ENCODE measurements at regions of chr22 and their contacts with region 1.

Region 1: DNA sequence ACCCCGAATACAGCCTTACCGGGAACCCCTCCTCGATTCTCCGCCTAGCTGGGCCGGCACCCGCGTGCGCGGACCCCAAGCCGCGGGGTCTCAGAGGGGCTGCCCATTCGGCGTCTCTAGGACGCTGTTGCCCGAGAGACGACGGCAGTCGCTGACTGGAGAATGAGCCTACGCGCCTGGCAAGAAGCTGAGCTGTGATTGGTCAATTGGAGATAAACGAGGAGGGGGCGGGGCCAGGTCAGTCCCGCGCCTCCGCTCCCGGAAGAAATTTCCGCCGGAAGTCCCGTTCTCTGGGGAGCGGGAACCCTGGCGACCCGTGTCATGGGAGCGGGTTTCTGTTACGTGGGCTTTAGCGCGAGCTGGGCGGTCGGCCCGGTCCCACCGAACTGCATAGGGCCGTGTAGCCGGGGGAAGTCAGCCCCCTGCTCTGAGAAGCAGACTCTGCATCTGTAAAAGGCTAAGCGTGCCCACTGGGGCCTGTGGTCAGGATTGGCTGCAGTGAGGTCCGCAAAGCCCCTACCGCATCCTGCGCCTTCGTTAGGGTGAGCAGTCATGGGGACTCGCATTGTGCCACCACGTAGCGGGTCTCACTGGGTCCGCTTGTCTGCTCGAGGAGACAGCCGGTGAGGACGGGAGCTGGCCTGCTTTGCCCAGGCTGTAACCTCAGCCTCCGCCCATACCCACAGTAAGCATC is at the start of gene EFCAB6:
- DNase-seq: no peak
- H3K4me3 ChIP-seq: peak within 1 kb of the TSS; percentile 98
- CTCF ChIP-seq: no peak

Region 2: GRCh38 chr22:43796567-43796966 is 15.7 kb before region 1 on chr22:
- CTCF ChIA-PET with region 1: interaction called, 12 read pairs
- POLR2A ChIA-PET with region 1: interaction called, 3 read pairs
- DNase-seq: peak; percentile 34
- H3K4me3 ChIP-seq: no peak overlapping the region
- CTCF ChIP-seq: peak; percentile 58

Region 3: DNA sequence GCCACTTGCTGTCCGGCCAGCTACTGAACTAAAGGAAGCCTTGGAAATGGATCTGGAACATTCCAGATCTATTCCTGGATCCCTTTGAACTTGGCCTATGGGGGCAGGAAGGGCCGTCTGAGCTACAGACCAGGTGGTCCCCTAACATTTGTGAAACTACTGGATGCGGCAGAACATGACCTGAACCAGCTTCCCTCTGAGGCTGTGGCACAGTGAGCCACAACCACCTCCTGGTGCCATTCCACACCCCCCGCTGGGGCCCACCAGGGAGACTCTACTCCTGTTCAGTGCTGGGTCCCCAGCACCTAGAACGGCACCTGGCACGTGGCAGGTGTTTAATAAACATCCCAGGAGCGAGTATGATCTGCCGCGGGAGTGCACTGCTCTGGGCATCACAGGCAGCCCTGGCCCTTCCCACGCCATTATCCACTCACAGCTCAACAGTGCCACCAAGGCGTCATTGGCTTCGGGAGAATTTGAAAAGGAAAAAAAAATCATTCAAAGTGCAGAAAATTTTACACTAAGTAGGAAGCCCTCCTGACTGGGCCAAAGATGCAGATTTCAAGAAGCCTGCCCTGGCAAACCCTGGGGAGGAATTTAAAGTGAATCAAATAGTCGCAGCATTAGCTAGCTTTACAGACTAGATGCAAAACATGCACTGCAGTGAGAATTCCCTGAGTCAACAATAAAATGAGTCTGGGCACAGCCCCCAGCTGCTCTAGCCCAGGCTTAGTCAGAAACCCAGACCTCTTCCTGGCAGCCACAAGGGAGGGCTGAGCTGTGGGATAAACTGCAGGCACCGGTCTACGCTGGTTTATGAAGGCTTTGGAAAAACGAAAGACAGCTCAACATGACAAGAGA is 14.1 kb after region 1 on chr22:
- CTCF ChIA-PET with region 1: interaction called, 3 read pairs
- POLR2A ChIA-PET with region 1: interaction called, 12 read pairs
- DNase-seq: peak; percentile 33
- H3K4me3 ChIP-seq: peak overlapping the region; percentile 35
- CTCF ChIP-seq: peak; percentile 26

Region 4: DNA sequence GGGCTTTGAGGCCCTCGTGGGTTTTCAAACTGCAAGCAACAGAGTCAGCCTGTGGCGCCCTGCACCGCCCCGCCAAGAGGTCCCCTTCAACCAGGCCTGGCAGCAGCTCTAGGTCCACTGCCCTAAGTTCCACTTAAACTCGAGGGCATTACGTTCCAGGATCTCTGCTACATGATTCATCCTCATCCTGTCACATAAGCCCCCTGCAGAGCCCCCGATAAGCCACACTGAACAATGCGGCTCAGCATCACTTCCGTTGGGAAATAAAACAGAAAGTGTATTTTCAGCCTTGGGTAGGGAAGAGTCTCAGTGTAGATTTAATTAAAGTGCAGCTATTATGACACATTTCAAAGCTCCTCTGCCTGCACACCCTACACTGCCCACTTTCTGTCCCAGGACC is 25.4 kb after region 1 on chr22:
- CTCF ChIA-PET with region 1: no interaction called
- POLR2A ChIA-PET with region 1: no interaction called
- DNase-seq: no peak
- H3K4me3 ChIP-seq: no peak overlapping the region
- CTCF ChIP-seq: no peak

Region 5: GRCh38 chr22:43923631-43924464 is 111.6 kb after region 1 on chr22 and contains the start of gene PNPLA3:
- CTCF ChIA-PET with region 1: no interaction called
- POLR2A ChIA-PET with region 1: no interaction called
- DNase-seq: peak; percentile 17
- H3K4me3 ChIP-seq: peak within 1 kb of the TSS; percentile 64
- CTCF ChIP-seq: peak; percentile 35

Measured in AG04449 (cell line).